Activated naive CD4-positive, alpha-beta T cell treated with anti-CD3 and anti-CD28 coated beads, Interleukin-2, amount 10 ng/mL, durations not matched to agents 7 days and 5 days (primary cell): ENCODE measurements at regions of chr19 and their contacts with region 1.

Region 1: DNA sequence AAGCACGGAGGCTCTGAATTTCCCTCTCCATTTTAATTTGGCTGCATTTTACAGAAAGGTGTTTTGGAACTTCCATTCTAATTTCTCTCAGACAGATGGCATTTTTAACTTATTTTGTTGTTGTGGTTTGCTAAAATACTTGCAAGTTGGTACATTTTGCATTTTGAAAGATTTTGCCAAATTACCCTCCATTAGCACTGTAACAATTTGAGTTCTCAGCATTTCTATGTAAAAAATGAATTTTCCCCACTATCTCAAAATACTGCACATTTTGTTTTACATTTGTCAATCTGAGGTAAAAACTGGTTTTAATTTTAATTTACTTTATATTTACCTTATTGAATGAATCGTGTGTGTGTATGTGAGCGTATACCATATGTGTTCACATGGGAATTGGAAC is 7.0 kb upstream of the HNRNPL start:
- DNase-seq: no peak
- H3K4me3 Mint-ChIP-seq: no peak overlapping the region
- H3K27ac Mint-ChIP-seq: peak overlapping the region; percentile 84
- H3K4me1 Mint-ChIP-seq: peaks cover 38% of the 10 kb centered on the region
- H3K27me3 Mint-ChIP-seq: peaks cover 6% of the 10 kb centered on the region

Region 2: GRCh38 chr19:38743394-38744295 is 113.2 kb before region 1 on chr19:
- CTCF ChIA-PET with region 1: no interaction called
- DNase-seq: no peak
- H3K4me3 Mint-ChIP-seq: no peak overlapping the region
- H3K27ac Mint-ChIP-seq: no peak overlapping the region
- H3K4me1 Mint-ChIP-seq: peaks cover 21% of the 10 kb centered on the region
- H3K27me3 Mint-ChIP-seq: peaks cover 59% of the 10 kb centered on the region

Region 3: GRCh38 chr19:38812841-38813320 is 43.9 kb before region 1 on chr19 and contains the start of gene LGALS4:
- CTCF ChIA-PET with region 1: no interaction called
- DNase-seq: no peak
- H3K4me3 Mint-ChIP-seq: no peak within 1 kb of the TSS
- H3K27ac Mint-ChIP-seq: no peak within 1 kb of the TSS
- H3K4me1 Mint-ChIP-seq: no peaks in the 10 kb centered on the region
- H3K27me3 Mint-ChIP-seq: no peaks in the 10 kb centered on the region

Region 4: DNA sequence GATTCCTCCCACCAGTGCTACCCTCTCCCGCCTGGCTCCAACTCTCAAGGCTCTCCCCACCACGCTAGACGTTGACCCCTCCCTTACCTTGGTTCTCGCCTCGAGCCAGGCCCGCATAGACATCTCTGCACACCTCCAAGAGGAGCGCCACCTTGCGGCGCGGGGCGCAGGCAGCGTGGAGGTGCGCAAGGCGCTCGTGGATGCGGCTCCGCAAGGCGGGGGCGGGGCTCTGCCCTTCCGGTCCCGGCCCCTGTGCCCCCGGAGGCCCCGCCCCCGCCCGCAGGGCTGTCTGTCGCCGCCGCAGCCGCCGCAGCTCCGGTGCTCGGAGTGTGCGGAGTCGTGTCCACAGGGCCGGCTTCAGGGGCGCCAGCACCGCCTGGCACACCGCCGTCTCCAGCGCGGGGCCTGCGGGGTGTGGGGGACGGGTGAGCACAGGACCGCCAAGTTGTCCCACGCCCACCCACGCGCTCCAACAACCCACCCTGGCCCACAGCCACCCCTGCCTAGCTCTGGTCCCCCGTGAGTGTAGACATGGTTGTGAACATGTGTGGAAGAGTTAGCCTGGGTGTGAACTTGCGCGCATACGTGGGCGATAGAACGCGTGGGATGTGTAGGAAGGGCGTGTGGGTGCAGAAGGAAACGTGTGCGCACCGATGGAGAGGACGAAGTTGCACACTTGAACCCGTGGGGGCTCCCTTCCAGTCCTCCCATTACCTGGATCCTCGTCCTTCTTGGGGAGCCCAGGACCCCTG is 13.2 kb after region 1 on chr19:
- CTCF ChIA-PET with region 1: interaction called, 10 read pairs
- DNase-seq: peak; percentile 95
- H3K4me3 Mint-ChIP-seq: peak overlapping the region; percentile 77
- H3K27ac Mint-ChIP-seq: peak overlapping the region; percentile 81
- H3K4me1 Mint-ChIP-seq: peaks cover 51% of the 10 kb centered on the region
- H3K27me3 Mint-ChIP-seq: no peaks in the 10 kb centered on the region

Region 5: GRCh38 chr19:39031368-39032062 is 174.7 kb after region 1 on chr19:
- CTCF ChIA-PET with region 1: no interaction called
- DNase-seq: peak; percentile 84
- H3K4me3 Mint-ChIP-seq: peak overlapping the region; percentile 52
- H3K27ac Mint-ChIP-seq: no peak overlapping the region
- H3K4me1 Mint-ChIP-seq: no peaks in the 10 kb centered on the region
- H3K27me3 Mint-ChIP-seq: peaks cover 77% of the 10 kb centered on the region